ENCODE measurements at regions of chr19 and their contacts with region 1.

Region 1: GRCh38 chr19:45994989-45995714 is at the start of gene CCDC61:
- DNase-seq: peak; percentile 100
- H3K4me3 ChIP-seq: peak within 1 kb of the TSS; percentile 83 to 97 (median 84)
- H3K27ac ChIP-seq: peak within 1 kb of the TSS; percentile 65
- H3K4me1 ChIP-seq: peaks cover 6% of the 10 kb centered on the region
- H3K27me3 ChIP-seq: no peaks in the 10 kb centered on the region
- CTCF ChIP-seq: no peak
- total RNA-seq, gene CCDC61: 3.3 to 14.8 TPM

Region 2: DNA sequence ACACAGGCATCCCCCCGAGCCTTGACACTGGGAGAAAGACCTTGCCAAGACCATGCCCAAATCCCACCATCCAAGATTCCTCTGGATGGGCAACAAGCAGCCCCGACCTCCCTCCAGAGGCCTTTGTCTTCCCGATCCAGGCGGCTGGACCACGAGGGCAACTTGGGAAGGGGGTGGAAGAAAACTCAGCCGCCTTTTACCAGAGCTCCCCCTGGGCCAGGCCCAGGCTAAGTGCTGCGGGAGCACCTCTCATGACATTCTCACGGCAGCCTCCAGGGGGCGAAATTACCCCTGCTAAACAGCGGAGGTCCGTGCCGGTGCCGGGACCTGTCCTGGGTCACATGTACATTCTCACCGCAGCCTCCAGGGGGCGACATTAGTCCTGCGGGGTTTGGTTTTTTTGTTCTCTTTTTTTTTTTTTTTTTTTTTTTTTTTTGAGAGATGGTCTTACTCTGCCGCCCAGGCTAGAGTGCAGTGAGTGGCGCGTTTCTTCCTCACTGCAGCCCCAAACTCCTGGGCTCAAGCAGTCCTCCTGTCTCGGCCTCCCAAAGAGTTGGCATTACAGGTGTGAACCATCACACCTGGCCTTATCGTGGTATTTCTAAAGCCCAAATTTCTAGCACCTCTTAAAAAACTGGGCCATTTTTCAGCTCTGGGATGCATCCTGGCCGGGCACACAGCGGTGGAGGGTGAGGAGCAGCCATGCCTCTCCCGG is 178.0 kb before region 1 on chr19:
- CTCF ChIA-PET with region 1: interaction called, 26 read pairs
- dilution Hi-C with region 1: no loop called
- in situ Hi-C with region 1: no loop called
- intact Hi-C with region 1: no loop called
- DNase-seq: peak; percentile 75
- H3K4me3 ChIP-seq: no peak overlapping the region
- H3K27ac ChIP-seq: no peak overlapping the region
- H3K4me1 ChIP-seq: peaks cover 14% of the 10 kb centered on the region
- H3K27me3 ChIP-seq: no peaks in the 10 kb centered on the region
- CTCF ChIP-seq: peak; percentile 96 to 98

Region 3: GRCh38 chr19:45886427-45887199 is 108.5 kb before region 1 on chr19:
- CTCF ChIA-PET with region 1: no interaction called
- dilution Hi-C with region 1: no loop called
- in situ Hi-C with region 1: no loop called
- intact Hi-C with region 1: loop called (anchors 5 kb)
- DNase-seq: peak; percentile 95
- H3K4me3 ChIP-seq: peak overlapping the region; percentile 54 to 74 (median 61)
- H3K27ac ChIP-seq: peak overlapping the region; percentile 73
- H3K4me1 ChIP-seq: peaks cover 32% of the 10 kb centered on the region
- H3K27me3 ChIP-seq: no peaks in the 10 kb centered on the region
- CTCF ChIP-seq: no peak

Region 4: DNA sequence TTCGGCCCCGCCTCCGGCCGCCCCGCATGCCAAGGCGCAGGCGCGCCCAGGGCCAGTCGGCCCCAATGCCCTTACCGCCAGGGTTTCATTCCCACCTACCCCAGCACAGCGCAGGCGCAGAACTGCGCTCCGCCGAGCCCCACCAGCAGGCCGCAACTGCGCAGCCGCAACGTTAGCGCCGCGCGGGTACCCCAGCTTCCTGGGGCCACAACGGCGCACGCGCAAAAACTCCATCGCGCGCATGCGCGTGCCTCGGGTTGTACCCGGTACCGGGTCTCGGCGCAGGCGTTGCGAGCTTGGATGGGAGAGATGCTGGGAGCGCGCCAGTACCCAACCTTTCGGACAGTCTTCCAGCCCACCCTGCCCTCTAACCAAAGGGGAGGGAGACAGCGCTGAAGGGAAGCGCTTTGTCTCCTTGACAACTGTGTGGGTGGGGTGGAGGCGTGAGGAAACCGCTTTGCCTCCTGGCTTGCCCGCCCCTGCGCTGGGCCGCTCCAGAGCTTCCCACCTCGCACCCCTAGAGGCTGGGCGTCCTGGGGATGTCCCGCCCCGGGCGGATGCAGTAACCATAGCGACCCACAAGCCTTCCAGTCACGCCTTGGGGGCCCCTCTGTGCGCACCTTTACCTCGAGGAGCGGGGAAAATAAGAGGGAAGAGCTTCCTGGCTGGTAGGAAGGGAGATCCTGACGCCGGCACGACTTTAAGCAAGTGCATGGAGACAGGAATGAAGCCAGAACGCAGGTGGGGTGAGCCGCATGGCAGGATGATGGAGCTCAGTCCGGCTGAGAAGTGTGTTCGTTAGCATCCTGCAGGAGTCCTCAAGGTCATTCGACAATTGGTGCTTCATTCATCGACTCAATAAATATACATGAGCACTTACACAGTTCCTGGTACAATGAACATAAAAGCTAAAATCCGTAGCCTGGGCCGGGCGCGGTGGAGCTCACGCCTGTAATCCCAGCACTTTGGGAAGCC is 92.2 kb before region 1 on chr19:
- CTCF ChIA-PET with region 1: no interaction called
- dilution Hi-C with region 1: loop called (anchors 5 kb)
- in situ Hi-C with region 1: no loop called
- intact Hi-C with region 1: loop called (anchors 5 kb)
- DNase-seq: peak; percentile 98
- H3K4me3 ChIP-seq: peak overlapping the region; percentile 66 to 71 (median 68)
- H3K27ac ChIP-seq: no peak overlapping the region
- H3K4me1 ChIP-seq: peaks cover 13% of the 10 kb centered on the region
- H3K27me3 ChIP-seq: no peaks in the 10 kb centered on the region
- CTCF ChIP-seq: no peak

Region 5: DNA sequence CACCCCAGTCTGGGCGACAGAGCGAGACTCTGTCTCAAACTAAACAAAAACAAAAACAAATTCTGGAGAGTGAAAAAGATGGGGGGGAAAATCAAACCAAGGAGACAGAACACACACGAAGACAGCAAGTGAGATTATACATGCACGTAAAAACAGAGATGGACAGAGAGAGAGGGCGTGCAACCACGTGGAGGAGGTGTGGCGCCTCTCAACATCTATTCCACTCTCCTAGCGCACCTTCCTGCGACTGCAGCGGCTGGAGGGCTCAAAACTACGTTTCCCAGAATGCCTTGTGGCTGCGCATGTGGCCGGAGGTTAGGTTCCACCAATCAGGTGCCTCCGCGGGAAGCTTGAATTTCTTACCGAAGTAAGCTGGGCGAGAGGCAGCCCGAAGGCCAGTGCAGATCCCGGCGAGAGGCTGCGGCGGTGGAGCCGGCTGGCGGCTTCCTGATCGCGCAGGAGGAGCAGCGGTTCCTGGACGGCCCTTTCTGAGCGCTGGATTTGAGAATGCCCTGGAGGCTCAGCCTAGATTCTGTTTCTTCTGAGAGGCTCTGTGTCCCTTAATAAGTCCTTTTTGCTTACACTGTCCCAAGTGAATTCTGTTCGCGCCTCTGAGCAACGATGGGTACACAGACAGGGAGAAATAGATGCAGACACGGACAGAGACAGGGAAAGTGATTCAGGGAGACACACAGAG is 67.4 kb before region 1 on chr19:
- CTCF ChIA-PET with region 1: interaction called, 8 read pairs
- dilution Hi-C with region 1: loop called (anchors 5 kb)
- in situ Hi-C with region 1: no loop called
- intact Hi-C with region 1: no loop called
- DNase-seq: peak; percentile 88
- H3K4me3 ChIP-seq: peak overlapping the region; percentile 5 to 23 (median 22)
- H3K27ac ChIP-seq: no peak overlapping the region
- H3K4me1 ChIP-seq: peaks cover 6% of the 10 kb centered on the region
- H3K27me3 ChIP-seq: peaks cover 3% of the 10 kb centered on the region
- CTCF ChIP-seq: no peak

Region 6: GRCh38 chr19:46016426-46017094 is 21.4 kb after region 1 on chr19:
- CTCF ChIA-PET with region 1: no interaction called
- dilution Hi-C with region 1: no loop called
- in situ Hi-C with region 1: no loop called
- intact Hi-C with region 1: loop called (anchors 2 kb)
- DNase-seq: peak; percentile 76
- H3K4me3 ChIP-seq: peak overlapping the region; percentile 31 to 59 (median 56)
- H3K27ac ChIP-seq: no peak overlapping the region
- H3K4me1 ChIP-seq: peaks cover 37% of the 10 kb centered on the region
- H3K27me3 ChIP-seq: no peaks in the 10 kb centered on the region
- CTCF ChIP-seq: peak; percentile 68 to 79

Region 7: GRCh38 chr19:46068345-46069258 is 73.5 kb after region 1 on chr19:
- CTCF ChIA-PET with region 1: no interaction called
- dilution Hi-C with region 1: loop called (anchors 5 kb)
- in situ Hi-C with region 1: no loop called
- intact Hi-C with region 1: no loop called
- DNase-seq: peak; percentile 99
- H3K4me3 ChIP-seq: no peak overlapping the region
- H3K27ac ChIP-seq: peak overlapping the region; percentile 81
- H3K4me1 ChIP-seq: peaks cover 64% of the 10 kb centered on the region
- H3K27me3 ChIP-seq: no peaks in the 10 kb centered on the region
- CTCF ChIP-seq: no peak